Right ventricle myocardium inferior (tissue), 1 donor: ENCODE measurements at regions of chr16 and their contacts with region 1.

Region 1: GRCh38 chr16:69286941-69287713 is 24.0 kb upstream of the VPS4A start:
- DNase-seq: peak; percentile 83
- ATAC-seq: peak; percentile 90

Region 2: GRCh38 chr16:69150146-69150865 is 136.8 kb before region 1 on chr16:
- intact Hi-C with region 1: loop called (anchors 1 kb)
- DNase-seq: no peak
- ATAC-seq: peak; percentile 67

Region 3: DNA sequence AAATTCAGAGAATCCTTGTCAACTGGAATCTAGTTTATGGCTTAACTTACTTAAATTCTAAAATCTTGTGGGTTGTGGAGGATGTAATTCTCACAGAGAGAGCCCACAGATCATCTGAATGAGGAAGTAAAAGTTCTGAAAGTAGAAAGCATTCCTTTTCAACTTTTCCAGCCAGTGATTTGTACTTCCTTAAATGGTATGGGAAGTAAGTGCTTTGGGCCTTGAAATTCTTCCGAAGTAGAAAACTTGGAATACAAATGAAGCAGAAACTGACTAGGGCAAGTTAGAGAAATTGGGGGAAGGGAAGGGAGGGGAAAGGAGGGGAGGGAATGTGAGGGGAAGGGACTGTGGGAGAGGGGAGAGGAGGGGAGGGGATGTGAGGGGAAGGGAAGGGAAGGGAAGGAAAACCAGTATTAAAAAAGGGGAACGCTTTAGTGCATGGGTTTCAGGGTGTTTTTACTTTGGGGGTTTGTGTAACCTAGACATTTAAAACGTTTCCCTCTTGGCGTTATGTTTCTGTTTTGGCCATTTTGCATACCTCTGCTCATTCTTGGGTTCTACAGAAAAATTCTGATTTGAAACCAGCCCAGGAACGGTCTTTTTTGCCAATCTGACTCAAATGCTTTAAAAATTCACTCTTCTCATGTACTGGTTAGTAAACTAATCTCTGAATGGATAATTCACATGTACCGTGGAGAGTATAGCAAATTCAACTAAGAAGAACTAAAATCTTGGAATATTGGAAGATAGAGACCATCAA is 115.6 kb before region 1 on chr16:
- intact Hi-C with region 1: loop called (anchors 5 kb)
- DNase-seq: no peak
- ATAC-seq: no peak

Region 4: DNA sequence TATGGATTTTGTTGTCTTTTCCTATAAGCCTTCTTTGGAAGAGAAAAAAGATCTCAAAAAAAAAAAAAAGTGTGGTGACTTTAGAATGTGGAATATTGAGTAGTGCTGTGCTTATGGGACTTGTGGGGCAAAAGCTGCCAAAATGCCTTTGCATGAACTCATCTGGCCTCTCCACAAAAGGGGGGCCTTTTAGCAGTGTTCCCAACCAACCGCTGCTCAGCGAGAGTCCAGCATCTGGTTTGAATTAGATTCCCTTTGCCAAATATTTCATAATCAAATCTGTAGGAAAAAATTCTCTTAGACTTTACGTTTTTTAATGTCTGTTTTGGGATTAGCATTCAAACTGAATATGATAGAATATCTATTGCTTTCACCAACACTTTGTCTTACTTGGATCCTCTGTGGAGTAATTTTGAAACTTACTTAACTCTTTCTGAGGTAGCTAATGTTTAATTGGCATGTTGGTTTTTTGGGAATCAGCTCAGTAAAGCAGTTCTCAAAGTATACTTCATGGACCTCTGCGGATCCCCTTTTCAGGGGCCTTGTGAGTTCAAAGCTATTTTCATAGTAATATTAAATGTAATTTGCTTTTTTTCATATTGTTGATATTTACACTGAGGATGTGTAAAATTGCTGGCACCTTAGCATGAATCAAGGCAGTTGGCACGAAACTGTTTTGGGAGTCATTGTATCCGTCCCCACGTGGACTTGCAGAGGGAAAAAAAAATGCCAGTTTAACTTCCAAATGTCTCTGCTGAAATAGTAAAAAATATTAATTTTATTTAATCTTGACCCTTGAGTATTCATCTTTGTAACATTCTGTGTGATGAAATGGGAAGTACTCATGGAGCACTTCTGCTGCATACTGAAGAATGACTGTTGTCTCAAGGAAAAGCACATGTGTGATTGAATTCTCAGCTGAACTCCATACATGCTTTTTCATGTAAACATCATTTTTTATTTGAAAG is 10.7 kb before region 1 on chr16:
- intact Hi-C with region 1: no loop called
- DNase-seq: peak; percentile 73
- ATAC-seq: peak; percentile 98